ENCODE measurements at regions of chr1 and their contacts with region 1.

Region 1: GRCh38 chr1:45512641-45513054 is 9.0 kb downstream of the PRDX1 start:
- DNase-seq: peak; percentile 64
- CTCF ChIP-seq: peak; percentile 71

Region 2: GRCh38 chr1:45499415-45499769 is 13.3 kb before region 1 on chr1:
- CTCF ChIA-PET with region 1: interaction called, 62 read pairs
- POLR2A ChIA-PET with region 1: interaction called, 5 read pairs
- DNase-seq: no peak
- CTCF ChIP-seq: no peak

Region 3: GRCh38 chr1:45543581-45544417 is 31.2 kb after region 1 on chr1:
- CTCF ChIA-PET with region 1: interaction called, 27 read pairs
- POLR2A ChIA-PET with region 1: no interaction called
- DNase-seq: peak; percentile 49
- CTCF ChIP-seq: no peak

Region 4: GRCh38 chr1:45583264-45583665 is 70.6 kb after region 1 on chr1:
- CTCF ChIA-PET with region 1: interaction called, 10 read pairs
- POLR2A ChIA-PET with region 1: interaction called, 6 read pairs
- DNase-seq: peak; percentile 98
- CTCF ChIP-seq: no peak

Region 5: GRCh38 chr1:45604239-45604638 is 91.6 kb after region 1 on chr1:
- CTCF ChIA-PET with region 1: no interaction called
- POLR2A ChIA-PET with region 1: no interaction called
- DNase-seq: no peak
- CTCF ChIP-seq: no peak

Region 6: DNA sequence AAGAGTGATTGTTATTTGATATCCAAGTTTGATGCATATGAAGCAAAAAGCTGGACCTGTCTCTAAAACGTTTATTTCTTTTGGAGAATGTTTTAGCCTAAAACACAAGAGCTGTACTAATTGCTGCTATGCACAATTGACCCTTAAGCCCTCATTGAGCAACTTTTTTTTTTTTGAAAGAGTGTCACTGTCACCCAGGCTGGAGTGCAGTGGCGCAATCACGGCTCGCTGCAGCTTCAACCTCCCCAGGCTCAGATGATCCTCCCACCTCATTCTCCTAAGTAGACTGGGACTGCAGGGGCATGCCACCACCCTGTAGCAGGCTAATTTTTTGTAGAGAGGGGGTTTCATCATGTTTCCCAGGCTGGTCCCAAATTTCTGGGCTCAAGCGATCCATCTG is 490.7 kb after region 1 on chr1:
- CTCF ChIA-PET with region 1: no interaction called
- POLR2A ChIA-PET with region 1: no interaction called
- DNase-seq: no peak
- CTCF ChIP-seq: no peak